Dendritic cell treated with granulocyte-macrophage colony-stimulating factor and Interleukin-4, amounts not matched to agents 40 ng/mL and 50 ng/mL, for 4 days (primary cell): ENCODE measurements at regions of chr5 and their contacts with region 1.

Region 1: GRCh38 chr5:88729084-88729828 is 153.7 kb downstream of the MEF2C start:
- H3K4me3 Mint-ChIP-seq: no peak overlapping the region
- H3K27ac Mint-ChIP-seq: no peak overlapping the region
- H3K4me1 Mint-ChIP-seq: peaks cover 28% of the 10 kb centered on the region
- H3K27me3 Mint-ChIP-seq: no peaks in the 10 kb centered on the region

Region 2: GRCh38 chr5:88826646-88827585 is 97.7 kb after region 1 on chr5:
- intact Hi-C with region 1: loop called (anchors 5 kb)
- H3K4me3 Mint-ChIP-seq: peak overlapping the region; percentile 45
- H3K27ac Mint-ChIP-seq: peak overlapping the region; percentile 87
- H3K4me1 Mint-ChIP-seq: peaks cover 53% of the 10 kb centered on the region
- H3K27me3 Mint-ChIP-seq: no peaks in the 10 kb centered on the region

Region 3: DNA sequence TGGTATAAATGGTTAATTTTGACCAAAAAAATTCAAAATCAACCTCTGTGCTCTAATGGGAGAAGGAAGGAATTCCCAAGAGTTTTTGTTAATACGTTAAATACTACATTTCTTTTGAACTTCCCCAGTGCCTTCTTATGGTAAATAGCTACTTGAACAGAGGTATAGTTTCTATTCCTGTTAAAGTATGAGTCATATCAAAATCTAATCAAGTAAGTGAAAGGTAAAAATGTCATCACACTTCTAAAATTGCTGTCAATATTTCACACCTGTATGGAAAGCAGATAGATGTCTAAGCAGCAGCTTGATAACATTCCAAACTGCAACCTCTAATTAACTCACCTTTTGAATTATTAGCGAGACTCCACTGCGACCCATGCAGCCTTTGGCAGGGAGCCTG is 367.8 kb after region 1 on chr5:
- intact Hi-C with region 1: loop called (anchors 10 kb)
- H3K4me3 Mint-ChIP-seq: no peak overlapping the region
- H3K27ac Mint-ChIP-seq: no peak overlapping the region
- H3K4me1 Mint-ChIP-seq: peaks cover 10% of the 10 kb centered on the region
- H3K27me3 Mint-ChIP-seq: no peaks in the 10 kb centered on the region

Region 4: GRCh38 chr5:90184764-90185163 is 1455.5 kb after region 1 on chr5:
- intact Hi-C with region 1: loop called (anchors 1 kb)
- H3K4me3 Mint-ChIP-seq: no peak overlapping the region
- H3K27ac Mint-ChIP-seq: no peak overlapping the region
- H3K4me1 Mint-ChIP-seq: no peaks in the 10 kb centered on the region
- H3K27me3 Mint-ChIP-seq: peaks cover 2% of the 10 kb centered on the region

Region 5: DNA sequence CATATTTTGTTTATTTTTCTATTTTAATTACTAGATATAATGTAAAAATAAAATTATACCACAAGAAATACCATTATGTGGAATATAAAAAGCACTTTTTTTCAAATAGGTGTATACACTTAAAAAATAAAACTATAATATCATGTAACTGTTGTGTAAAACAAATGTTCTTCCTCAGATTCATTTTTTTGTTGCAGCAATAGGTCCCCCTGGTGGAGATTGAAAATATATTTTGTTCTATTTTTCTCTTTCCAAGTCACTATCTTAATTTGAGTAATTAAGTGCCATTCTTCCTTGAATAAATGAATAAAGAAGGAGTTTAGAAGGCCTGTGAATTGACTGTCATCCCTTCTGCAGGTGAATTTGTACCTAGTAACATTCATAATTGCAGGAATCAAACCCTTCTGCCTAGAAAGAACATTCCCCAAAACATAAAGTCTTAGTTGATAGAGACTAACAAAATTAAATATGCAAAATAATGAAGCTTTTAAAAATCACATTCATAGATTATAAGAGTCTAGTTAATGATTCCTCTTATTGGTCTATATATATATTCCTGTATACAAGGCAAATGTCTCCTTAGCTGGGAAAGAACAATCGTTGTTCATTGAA is 1656.9 kb after region 1 on chr5:
- intact Hi-C with region 1: loop called (anchors 5 kb)
- H3K4me3 Mint-ChIP-seq: no peak overlapping the region
- H3K27ac Mint-ChIP-seq: no peak overlapping the region
- H3K4me1 Mint-ChIP-seq: no peaks in the 10 kb centered on the region
- H3K27me3 Mint-ChIP-seq: no peaks in the 10 kb centered on the region